CD8-positive, alpha-beta T cell (primary cell): ENCODE measurements at regions of chr14 and their contacts with region 1.

Region 1: GRCh38 chr14:99266181-99267178 is 5.5 kb downstream of the BCL11B start:
- DNase-seq: peak; percentile 85 to 93 (median 91)
- ATAC-seq: peak; percentile 24
- H3K4me3 ChIP-seq: peak overlapping the region; percentile 87 to 88
- H3K4me3 Mint-ChIP-seq: peak overlapping the region; percentile 100
- H3K27ac ChIP-seq: peak overlapping the region; percentile 96 to 97
- H3K27ac Mint-ChIP-seq: peak overlapping the region; percentile 100
- H3K4me1 ChIP-seq: peaks cover 40% of the 10 kb centered on the region
- H3K4me1 Mint-ChIP-seq: peaks cover 64% of the 10 kb centered on the region
- H3K27me3 ChIP-seq: no peaks in the 10 kb centered on the region
- H3K27me3 Mint-ChIP-seq: no peaks in the 10 kb centered on the region
- CTCF ChIP-seq: peak; percentile 99

Region 2: GRCh38 chr14:98173305-98173704 is 1093.2 kb before region 1 on chr14:
- CTCF ChIA-PET with region 1: interaction called, 5 read pairs
- POLR2A ChIA-PET with region 1: interaction called, 24 read pairs
- intact Hi-C with region 1: no loop called
- DNase-seq: peak; percentile 39 to 91 (median 77)
- ATAC-seq: peak; percentile 60
- H3K4me3 ChIP-seq: peak overlapping the region; percentile 18 to 28
- H3K4me3 Mint-ChIP-seq: peak overlapping the region; percentile 76
- H3K27ac ChIP-seq: peak overlapping the region; percentile 49 to 76
- H3K27ac Mint-ChIP-seq: peak overlapping the region; percentile 96
- H3K4me1 ChIP-seq: peaks cover 100% of the 10 kb centered on the region
- H3K4me1 Mint-ChIP-seq: peaks cover 99% of the 10 kb centered on the region
- H3K27me3 ChIP-seq: no peaks in the 10 kb centered on the region
- H3K27me3 Mint-ChIP-seq: no peaks in the 10 kb centered on the region
- CTCF ChIP-seq: no peak

Region 3: DNA sequence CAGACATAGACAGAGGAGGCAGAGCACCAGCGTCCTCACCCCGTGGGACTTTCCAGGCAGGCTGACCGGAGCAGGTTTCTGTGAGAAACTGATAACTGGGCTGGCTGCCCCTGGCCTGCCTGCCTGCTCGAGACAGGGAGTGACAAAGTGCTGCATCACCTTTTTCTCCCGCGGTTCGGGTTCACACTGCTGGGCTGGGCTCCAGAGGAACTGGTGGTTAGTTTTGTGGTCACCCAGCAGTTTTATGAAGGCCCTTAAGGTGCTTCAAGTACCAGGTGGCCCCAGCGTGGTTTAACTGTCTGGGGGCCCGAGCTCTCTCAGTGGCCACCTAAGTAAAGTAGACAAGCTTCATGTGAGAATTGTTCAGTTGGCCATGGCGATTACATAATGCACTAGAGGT is 1068.1 kb before region 1 on chr14:
- CTCF ChIA-PET with region 1: interaction called, 7 read pairs
- POLR2A ChIA-PET with region 1: interaction called, 4 read pairs
- intact Hi-C with region 1: loop called (anchors 2 to 5 kb)
- DNase-seq: peak in 7 of 9 experiments; percentile 35 to 79 (median 60)
- ATAC-seq: peak; percentile 42
- H3K4me3 ChIP-seq: peak overlapping the region in 1 of 2 experiments; percentile 12
- H3K4me3 Mint-ChIP-seq: peak overlapping the region; percentile 54
- H3K27ac ChIP-seq: peak overlapping the region in 1 of 2 experiments; percentile 51
- H3K27ac Mint-ChIP-seq: peak overlapping the region; percentile 85
- H3K4me1 ChIP-seq: peaks cover 68% of the 10 kb centered on the region
- H3K4me1 Mint-ChIP-seq: peaks cover 93% of the 10 kb centered on the region
- H3K27me3 ChIP-seq: no peaks in the 10 kb centered on the region
- H3K27me3 Mint-ChIP-seq: no peaks in the 10 kb centered on the region
- CTCF ChIP-seq: no peak

Region 4: GRCh38 chr14:98984719-98985041 is 281.8 kb before region 1 on chr14:
- CTCF ChIA-PET with region 1: interaction called, 7 read pairs
- POLR2A ChIA-PET with region 1: interaction called, 3 read pairs
- intact Hi-C with region 1: loop called (anchors 5 kb)
- DNase-seq: peak; percentile 45 to 84 (median 72)
- ATAC-seq: peak; percentile 93
- H3K4me3 ChIP-seq: no peak overlapping the region
- H3K4me3 Mint-ChIP-seq: peak overlapping the region; percentile 80
- H3K27ac ChIP-seq: peak overlapping the region; percentile 25 to 65
- H3K27ac Mint-ChIP-seq: peak overlapping the region; percentile 94
- H3K4me1 ChIP-seq: peaks cover 31% of the 10 kb centered on the region
- H3K4me1 Mint-ChIP-seq: peaks cover 40% of the 10 kb centered on the region
- H3K27me3 ChIP-seq: no peaks in the 10 kb centered on the region
- H3K27me3 Mint-ChIP-seq: no peaks in the 10 kb centered on the region
- CTCF ChIP-seq: no peak

Region 5: DNA sequence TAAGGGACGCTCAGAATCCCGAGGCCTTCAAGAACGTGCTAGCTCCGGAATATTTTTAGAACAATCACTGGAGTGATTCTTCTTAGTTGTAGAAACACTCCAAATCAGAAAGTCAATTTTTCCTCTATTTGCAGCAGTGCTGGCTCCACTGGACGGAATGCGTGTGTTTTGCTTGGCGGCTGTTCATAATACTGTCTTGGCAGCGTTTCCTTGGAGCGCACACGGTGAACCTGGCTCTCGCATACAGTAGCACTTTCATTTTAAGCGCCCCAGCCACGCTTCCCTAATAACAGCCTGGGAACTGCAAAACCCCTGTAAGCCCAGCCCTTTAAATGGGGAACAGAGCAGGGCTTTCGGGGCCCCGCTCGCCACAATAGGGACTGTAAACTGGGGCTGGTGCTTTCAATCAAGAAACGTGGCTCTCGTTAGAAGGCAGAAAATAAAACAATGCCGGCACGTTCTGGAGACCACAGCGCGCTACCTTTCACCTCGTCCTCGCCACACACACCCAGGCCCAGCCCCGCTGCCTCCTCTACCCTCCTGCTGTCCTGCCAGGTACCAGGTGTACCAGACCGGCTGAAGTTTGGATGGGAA is 74.4 kb before region 1 on chr14:
- CTCF ChIA-PET with region 1: interaction called, 120 read pairs
- POLR2A ChIA-PET with region 1: interaction called, 2,179 read pairs
- intact Hi-C with region 1: loop called (anchors 2 kb)
- DNase-seq: peak in 3 of 9 experiments; percentile 55 to 75 (median 64)
- ATAC-seq: peak; percentile 38
- H3K4me3 ChIP-seq: peak overlapping the region; percentile 36 to 44
- H3K4me3 Mint-ChIP-seq: peak overlapping the region; percentile 87
- H3K27ac ChIP-seq: peak overlapping the region; percentile 71 to 76
- H3K27ac Mint-ChIP-seq: peak overlapping the region; percentile 99
- H3K4me1 ChIP-seq: peaks cover 97% of the 10 kb centered on the region
- H3K4me1 Mint-ChIP-seq: peaks cover 96% of the 10 kb centered on the region
- H3K27me3 ChIP-seq: no peaks in the 10 kb centered on the region
- H3K27me3 Mint-ChIP-seq: no peaks in the 10 kb centered on the region
- CTCF ChIP-seq: no peak

Region 6: GRCh38 chr14:99230208-99231151 is 36.0 kb before region 1 on chr14:
- CTCF ChIA-PET with region 1: interaction called, 284 read pairs
- POLR2A ChIA-PET with region 1: interaction called, 2,179 read pairs
- intact Hi-C with region 1: loop called (anchors 1 kb)
- DNase-seq: peak; percentile 73 to 95 (median 85)
- ATAC-seq: peak; percentile 62
- H3K4me3 ChIP-seq: peak overlapping the region; percentile 16 to 23
- H3K4me3 Mint-ChIP-seq: peak overlapping the region; percentile 75
- H3K27ac ChIP-seq: peak overlapping the region; percentile 60 to 96
- H3K27ac Mint-ChIP-seq: peak overlapping the region; percentile 99
- H3K4me1 ChIP-seq: peaks cover 99% of the 10 kb centered on the region
- H3K4me1 Mint-ChIP-seq: peaks cover 95% of the 10 kb centered on the region
- H3K27me3 ChIP-seq: no peaks in the 10 kb centered on the region
- H3K27me3 Mint-ChIP-seq: no peaks in the 10 kb centered on the region
- CTCF ChIP-seq: peak; percentile 46

Region 7: GRCh38 chr14:99252940-99253868 is 13.3 kb before region 1 on chr14:
- CTCF ChIA-PET with region 1: interaction called, 40 read pairs
- POLR2A ChIA-PET with region 1: interaction called, 2,179 read pairs
- intact Hi-C with region 1: loop called in 1 of 2 experiments (anchors 1 kb)
- DNase-seq: peak in 5 of 9 experiments; percentile 71 to 90 (median 81)
- ATAC-seq: peak; percentile 52
- H3K4me3 ChIP-seq: peak overlapping the region; percentile 21 to 31
- H3K4me3 Mint-ChIP-seq: peak overlapping the region; percentile 79
- H3K27ac ChIP-seq: peak overlapping the region; percentile 61 to 96
- H3K27ac Mint-ChIP-seq: peak overlapping the region; percentile 95
- H3K4me1 ChIP-seq: peaks cover 100% of the 10 kb centered on the region
- H3K4me1 Mint-ChIP-seq: peaks cover 98% of the 10 kb centered on the region
- H3K27me3 ChIP-seq: no peaks in the 10 kb centered on the region
- H3K27me3 Mint-ChIP-seq: no peaks in the 10 kb centered on the region
- CTCF ChIP-seq: no peak

Region 8: DNA sequence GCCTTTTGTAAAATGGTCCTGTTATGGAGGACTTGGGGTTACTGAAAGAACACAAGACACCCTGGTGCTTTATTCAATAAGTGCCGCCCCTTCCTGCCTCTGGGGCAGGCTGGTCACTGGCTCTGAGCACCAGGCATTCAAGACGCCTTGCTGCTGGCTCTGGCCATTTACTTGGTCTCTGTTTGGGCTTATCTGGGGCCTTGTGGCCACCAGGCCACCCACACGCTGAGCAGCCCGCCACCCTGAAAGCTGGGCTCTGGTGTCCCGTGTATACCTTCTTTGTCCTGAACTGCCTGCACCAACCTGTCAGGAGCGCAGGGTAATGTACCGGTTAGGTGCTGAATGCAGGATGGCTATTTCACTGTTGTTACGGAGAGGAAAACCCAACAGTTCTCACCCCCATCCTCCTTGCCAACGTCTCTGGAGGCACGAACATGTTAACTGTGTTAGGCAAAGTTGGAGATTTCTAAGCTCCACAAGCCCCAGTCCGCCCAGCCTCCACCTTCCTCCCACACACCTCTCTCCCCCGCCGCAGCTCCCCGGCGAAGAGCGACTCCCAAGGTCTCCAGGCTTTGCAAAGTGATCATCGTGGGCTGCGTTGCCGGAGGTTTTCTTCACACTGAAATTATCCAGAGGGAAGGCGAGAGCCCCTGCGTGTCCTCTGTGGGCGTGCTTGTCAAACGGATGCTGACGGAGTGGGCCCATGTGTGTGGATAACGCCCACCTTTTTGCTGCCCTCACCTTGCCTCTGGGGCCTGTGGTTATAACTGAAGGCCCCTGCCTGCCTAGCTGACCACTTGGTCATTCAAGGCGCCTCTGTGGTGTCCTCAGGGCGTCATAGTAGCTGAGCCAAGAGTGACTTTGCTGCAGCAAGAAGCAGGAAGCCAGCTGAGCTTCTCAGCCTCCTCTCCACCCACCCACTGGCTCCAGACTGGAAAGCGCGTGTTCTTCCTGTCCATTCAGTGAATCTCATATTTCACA is 1339.5 kb after region 1 on chr14:
- CTCF ChIA-PET with region 1: no interaction called
- POLR2A ChIA-PET with region 1: no interaction called
- intact Hi-C with region 1: no loop called
- DNase-seq: no peak
- ATAC-seq: no peak
- H3K4me3 ChIP-seq: no peak overlapping the region
- H3K4me3 Mint-ChIP-seq: no peak overlapping the region
- H3K27ac ChIP-seq: no peak overlapping the region
- H3K27ac Mint-ChIP-seq: no peak overlapping the region
- H3K4me1 ChIP-seq: no peaks in the 10 kb centered on the region
- H3K4me1 Mint-ChIP-seq: no peaks in the 10 kb centered on the region
- H3K27me3 ChIP-seq: peaks cover 0 to 2% of the 10 kb centered on the region in 2 experiments
- H3K27me3 Mint-ChIP-seq: peaks cover 15% of the 10 kb centered on the region
- CTCF ChIP-seq: no peak